ENCODE measurements at regions of chr9 and their contacts with region 1.

Region 1: DNA sequence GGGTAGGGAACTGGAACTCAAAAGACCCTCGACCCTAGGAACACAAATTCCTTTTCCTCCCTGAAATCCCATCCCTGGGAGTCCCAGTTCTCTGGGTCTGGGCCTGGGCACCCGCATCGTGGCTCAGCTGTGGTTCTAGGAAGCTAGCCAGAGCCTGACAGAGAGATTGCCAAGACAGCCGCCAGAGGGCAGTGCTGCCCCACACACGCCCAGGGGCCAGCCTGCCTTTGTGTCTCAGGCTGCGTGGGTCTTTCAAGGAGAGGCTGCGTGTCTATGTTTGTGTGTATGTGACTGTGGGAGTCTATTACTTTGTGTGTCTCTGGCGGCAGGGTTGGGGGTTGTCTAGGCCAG is 32.0 kb upstream of the TTLL11 start:
- DNase-seq: peak; percentile 79
- H3K4me3 ChIP-seq: no peak overlapping the region
- H3K27ac ChIP-seq: no peak overlapping the region
- H3K4me1 ChIP-seq: peaks cover 11% of the 10 kb centered on the region
- H3K27me3 ChIP-seq: peaks cover 11% of the 10 kb centered on the region
- CTCF ChIP-seq: peak; percentile 92

Region 2: DNA sequence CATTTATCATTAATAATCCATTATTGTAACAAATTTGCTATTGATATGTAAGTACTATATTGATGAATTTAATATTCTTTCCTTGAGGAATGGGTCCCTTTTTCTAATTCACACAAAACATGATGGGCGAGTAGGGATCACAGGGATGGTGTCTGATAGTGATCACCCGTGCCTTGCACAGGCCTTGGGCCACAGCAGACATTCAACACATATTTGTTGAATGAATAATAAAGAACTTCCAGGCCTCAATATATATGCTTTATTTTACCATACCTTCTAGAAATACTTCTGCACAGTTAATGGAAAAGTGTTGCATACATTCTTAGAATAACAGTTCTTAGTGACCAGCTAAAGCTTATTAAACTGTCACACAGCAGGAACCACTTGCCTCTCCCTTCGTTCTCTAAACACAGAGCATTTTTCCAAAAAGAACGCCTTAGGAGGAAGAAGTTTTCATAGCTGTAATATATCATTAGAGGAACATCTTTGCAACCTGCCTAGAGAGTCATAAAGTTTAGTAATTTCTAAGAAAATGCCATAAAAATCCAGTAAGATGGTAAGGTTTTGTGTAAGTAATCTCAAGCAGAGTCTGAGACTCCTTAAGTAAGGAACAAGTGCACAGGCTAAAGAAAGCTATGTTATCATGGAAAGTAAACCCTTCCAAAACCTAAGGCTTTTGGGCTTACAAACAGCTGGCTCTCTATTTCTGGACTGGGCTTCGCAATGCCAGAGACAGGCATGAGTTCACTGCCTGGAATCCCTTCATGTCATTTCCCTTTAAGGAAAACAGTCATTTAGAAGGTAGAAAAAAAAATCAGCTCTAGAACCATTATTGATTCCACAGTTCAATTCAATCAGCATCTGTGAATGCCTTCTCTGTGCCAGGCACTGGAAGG is 49.8 kb before region 1 on chr9:
- CTCF ChIA-PET with region 1: no interaction called
- POLR2A ChIA-PET with region 1: no interaction called
- intact Hi-C with region 1: no loop called
- DNase-seq: no peak
- H3K4me3 ChIP-seq: no peak overlapping the region
- H3K27ac ChIP-seq: no peak overlapping the region
- H3K4me1 ChIP-seq: no peaks in the 10 kb centered on the region
- H3K27me3 ChIP-seq: no peaks in the 10 kb centered on the region
- CTCF ChIP-seq: no peak

Region 3: DNA sequence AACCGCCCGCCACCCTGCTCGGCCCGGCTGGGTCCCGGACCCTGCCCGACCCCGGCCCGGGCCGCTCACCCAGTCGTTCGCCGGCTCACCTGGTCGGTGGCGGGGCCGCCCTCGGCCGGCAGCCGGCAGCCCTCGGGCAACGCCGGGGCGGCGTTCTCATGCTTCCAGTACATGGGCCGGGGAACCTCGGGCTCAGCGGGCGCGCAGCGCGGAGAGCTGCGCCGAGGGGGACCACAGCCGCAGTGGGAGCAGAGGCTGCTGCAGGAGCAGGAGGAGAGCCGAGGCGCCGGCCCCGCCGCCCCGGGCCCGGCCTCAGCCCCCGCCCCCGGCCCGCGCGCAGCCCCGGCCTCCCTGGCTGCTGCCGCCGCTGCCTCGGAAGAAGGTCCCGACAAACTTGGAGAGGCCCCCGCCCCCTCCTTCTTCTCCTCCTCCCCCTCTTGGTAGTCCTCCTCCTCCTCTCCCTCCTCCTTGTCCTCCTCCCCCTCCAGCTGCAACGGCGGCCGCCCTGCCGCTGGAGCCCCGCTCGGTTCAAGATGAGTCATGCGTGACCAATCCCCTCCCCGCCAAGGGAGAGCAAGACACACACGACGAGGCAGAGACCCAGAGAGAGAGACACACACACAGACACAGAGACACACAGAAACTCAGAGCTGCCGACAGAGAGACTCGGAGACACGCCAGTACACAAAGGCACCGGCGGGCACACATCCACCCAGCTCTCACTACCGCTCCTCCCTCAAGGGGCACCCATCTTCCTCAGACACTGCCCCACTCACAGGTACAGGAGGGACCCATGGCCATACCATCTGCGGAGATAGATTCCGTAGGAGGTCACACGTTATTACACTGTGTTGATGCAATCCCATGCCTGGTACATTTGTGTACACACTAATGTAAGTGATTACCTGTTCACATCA is 103.7 kb after region 1 on chr9 and contains the start of gene LHX6:
- CTCF ChIA-PET with region 1: no interaction called
- POLR2A ChIA-PET with region 1: no interaction called
- intact Hi-C with region 1: no loop called
- DNase-seq: no peak
- H3K4me3 ChIP-seq: peak within 1 kb of the TSS; percentile 41
- H3K27ac ChIP-seq: no peak within 1 kb of the TSS
- H3K4me1 ChIP-seq: no peaks in the 10 kb centered on the region
- H3K27me3 ChIP-seq: peaks cover 97% of the 10 kb centered on the region
- CTCF ChIP-seq: no peak
- total RNA-seq, gene LHX6: not detected in 2 replicates

Region 4: GRCh38 chr9:122453677-122454135 is 328.6 kb after region 1 on chr9:
- CTCF ChIA-PET with region 1: no interaction called
- POLR2A ChIA-PET with region 1: no interaction called
- intact Hi-C with region 1: loop called (anchors 5 kb)
- DNase-seq: no peak
- H3K4me3 ChIP-seq: no peak overlapping the region
- H3K27ac ChIP-seq: no peak overlapping the region
- H3K4me1 ChIP-seq: no peaks in the 10 kb centered on the region
- H3K27me3 ChIP-seq: peaks cover 16% of the 10 kb centered on the region
- CTCF ChIP-seq: no peak

Region 5: DNA sequence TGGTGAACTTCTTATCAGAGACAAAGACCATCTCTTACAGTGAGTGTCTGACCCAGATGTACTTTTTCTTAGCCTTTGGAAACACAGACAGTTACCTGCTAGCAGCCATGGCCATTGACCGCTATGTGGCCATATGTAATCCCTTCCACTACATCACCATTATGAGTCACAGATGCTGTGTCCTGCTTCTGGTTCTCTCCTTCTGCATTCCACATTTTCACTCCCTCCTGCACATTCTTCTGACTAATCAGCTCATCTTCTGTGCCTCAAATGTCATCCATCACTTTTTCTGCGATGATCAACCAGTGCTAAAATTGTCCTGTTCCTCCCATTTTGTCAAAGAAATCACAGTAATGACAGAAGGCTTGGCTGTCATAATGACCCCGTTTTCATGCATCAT is 536.8 kb after region 1 on chr9:
- CTCF ChIA-PET with region 1: no interaction called
- POLR2A ChIA-PET with region 1: no interaction called
- intact Hi-C with region 1: no loop called
- DNase-seq: no peak
- H3K4me3 ChIP-seq: no peak overlapping the region
- H3K27ac ChIP-seq: no peak overlapping the region
- H3K4me1 ChIP-seq: no peaks in the 10 kb centered on the region
- H3K27me3 ChIP-seq: peaks cover 54% of the 10 kb centered on the region
- CTCF ChIP-seq: no peak

Region 6: DNA sequence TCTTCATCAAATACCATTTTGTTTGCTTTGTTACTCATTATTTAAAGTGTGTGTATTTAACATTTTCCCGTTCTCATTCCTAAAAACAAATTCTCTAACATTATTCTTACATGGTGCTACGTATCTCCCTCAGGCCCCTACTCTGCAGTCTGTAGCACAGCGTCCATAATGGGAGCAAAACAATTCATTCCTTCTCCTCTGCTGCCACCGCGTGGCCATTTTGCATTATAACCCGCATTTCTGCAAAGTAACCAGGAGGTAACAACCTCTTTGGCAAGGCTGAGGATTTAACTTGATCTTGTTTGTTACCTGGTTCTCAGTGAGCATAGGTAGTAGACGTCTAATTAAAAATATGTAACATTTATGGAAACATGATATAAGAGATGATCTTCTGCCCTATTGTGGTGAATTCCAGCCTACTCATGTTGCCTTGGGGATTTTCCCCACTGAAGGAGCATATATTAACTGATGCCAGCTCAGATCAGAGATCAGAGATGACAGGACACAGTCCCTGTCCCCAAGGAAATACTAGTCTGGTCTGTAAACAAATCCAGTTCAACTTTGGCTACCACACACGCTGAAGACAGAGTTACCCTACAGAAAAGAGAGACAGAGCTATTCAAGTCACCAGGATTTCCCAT is 685.3 kb after region 1 on chr9:
- CTCF ChIA-PET with region 1: interaction called, 3 read pairs
- POLR2A ChIA-PET with region 1: no interaction called
- intact Hi-C with region 1: loop called (anchors 1 kb)
- DNase-seq: peak; percentile 86
- H3K4me3 ChIP-seq: no peak overlapping the region
- H3K27ac ChIP-seq: no peak overlapping the region
- H3K4me1 ChIP-seq: no peaks in the 10 kb centered on the region
- H3K27me3 ChIP-seq: no peaks in the 10 kb centered on the region
- CTCF ChIP-seq: peak; percentile 82